ENCODE measurements at regions of chr3 and their contacts with region 1.

Region 1: DNA sequence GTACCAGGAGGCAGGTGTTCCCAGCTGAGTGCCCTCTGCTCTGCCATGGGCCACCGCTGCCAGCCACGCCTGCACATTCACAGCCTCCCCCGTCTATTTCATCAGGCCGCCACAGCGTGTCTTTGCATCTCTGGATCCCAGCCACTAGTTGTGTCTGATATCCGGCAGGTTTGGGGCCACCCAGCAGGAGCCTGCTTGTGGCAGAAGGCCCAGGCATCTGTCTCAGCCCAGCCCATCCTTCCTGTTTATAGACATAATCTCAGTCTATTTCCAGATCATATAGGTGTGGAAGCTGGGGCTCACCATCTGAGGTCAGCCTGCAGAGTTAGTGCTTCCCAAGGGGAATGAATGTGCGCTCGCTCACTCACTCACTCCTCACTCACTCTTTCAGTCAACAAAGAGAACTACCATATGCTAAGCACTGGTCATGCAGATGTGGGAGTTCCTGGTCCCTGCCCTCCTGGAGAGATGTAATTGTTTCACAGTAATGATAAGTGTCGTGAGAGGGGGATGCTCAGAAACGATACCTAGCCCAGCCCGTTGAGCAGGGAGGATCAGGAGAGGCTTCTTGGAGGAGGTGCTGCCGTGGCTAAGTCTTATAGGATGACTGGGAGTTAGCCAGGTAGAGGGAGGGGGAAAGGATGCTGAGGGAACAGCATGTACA is 60.6 kb downstream of the FGD5 start:
- ATAC-seq: peak in 7 of 8 experiments; percentile 16 to 80 (median 68)
- H3K4me3 ChIP-seq: no peak overlapping the region
- H3K27ac ChIP-seq: no peak overlapping the region
- H3K4me1 ChIP-seq: peaks cover 3 to 14% of the 10 kb centered on the region in 2 donors

Region 2: DNA sequence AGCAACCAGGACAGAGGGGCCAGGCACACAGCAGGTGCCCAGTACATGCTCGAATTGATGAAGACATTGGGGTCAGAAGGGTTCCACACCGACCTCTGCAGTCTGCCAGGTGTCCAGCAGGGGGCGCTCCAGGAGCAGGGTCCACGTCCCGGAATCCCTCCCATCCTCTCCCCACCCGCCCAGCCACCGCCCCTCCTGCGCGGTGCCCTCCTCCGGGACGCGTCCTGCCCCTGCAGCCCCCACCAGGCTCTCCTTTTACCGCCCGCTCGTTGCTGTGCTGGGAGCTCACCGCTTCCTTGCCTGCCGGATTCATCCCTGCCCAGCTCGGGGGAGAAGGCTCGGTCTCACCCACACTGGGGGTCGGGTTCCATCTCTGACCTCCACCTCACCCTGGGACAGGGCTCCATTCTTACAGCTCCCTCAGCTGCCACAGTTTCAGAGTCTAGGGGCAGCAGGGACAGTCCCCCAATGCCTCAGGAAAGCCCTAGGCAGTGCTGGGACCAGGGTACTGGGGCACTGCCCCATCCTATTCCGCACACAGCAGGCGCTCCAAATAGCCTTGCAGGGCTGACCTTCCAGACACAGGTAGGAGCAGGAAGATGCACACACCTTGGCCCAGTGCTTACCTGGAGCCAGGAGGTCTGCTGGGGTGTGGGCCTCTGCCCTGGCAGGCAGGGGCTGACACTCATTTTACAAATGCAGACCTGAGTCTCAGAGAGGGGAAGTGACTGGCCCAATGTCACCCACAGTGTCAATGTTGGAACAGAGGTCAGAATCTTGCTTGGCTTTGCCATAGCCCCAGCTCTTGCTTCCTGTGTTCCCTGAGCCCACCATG is 370.2 kb before region 1 on chr3:
- in situ Hi-C with region 1: loop called in 1 of 9 experiments (anchors 25 kb)
- ATAC-seq: peak; percentile 75 to 91 (median 86)
- H3K4me3 ChIP-seq: peak overlapping the region in 4 of 5 donors; percentile 12 to 25 (median 23)
- H3K27ac ChIP-seq: no peak overlapping the region
- H3K4me1 ChIP-seq: peaks cover 2 to 7% of the 10 kb centered on the region in 2 donors

Region 3: DNA sequence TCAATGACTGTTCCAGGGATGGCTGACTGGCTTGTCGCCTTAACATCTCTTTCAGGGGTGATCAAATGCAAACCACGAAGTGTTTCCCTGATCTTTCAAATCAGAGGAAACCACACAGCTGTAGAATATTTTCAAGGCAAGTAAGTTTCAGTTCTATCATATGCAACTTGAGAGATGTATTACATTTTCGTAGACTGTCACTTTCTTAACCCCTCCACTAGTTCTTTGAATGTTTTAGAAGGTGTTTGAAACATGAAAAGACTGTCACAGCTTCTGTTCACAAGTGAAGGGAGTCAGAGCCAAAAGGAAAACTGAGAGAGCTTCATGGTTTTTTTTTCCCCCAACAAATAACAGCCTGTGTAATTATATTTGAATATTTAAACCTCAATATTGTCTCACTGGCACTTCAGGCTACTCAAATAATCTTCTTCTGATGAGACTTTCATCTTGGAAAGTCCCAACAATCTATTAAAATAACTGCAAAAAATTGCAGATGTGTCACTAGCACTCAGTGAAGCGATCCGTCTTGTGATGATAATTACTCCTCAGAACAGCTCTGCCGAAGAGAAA is 300.8 kb after region 1 on chr3:
- in situ Hi-C with region 1: no loop called
- ATAC-seq: peak in 4 of 8 experiments; percentile 20 to 47 (median 32)
- H3K4me3 ChIP-seq: no peak overlapping the region
- H3K27ac ChIP-seq: no peak overlapping the region
- H3K4me1 ChIP-seq: peaks cover 0 to 8% of the 10 kb centered on the region in 2 donors

Measured in motor neuron (in vitro differentiated cells).